H1 (cell line): ENCODE measurements at regions of chr9 and their contacts with region 1.

Region 1: GRCh38 chr9:34603610-34604231 is 8.2 kb downstream of the RPP25L start:
- DNase-seq: peak in 1 of 2 experiments; percentile 96
- H3K4me3 ChIP-seq: no peak overlapping the region
- H3K27ac ChIP-seq: no peak overlapping the region
- H3K4me1 ChIP-seq: peaks cover 0 to 5% (median 2%) of the 10 kb centered on the region in 4 experiments; a peak in 2 of 7 replicates
- H3K27me3 ChIP-seq: peaks cover 0 to 3% (median 0%) of the 10 kb centered on the region in 4 experiments; a peak in 2 of 7 replicates
- CTCF ChIP-seq: peak; percentile 77 to 96 (median 96)
- EP300 ChIP-seq: no peak
- POLR2A ChIP-seq: no peak
- RAD21 ChIP-seq: peak; percentile 99

Region 2: DNA sequence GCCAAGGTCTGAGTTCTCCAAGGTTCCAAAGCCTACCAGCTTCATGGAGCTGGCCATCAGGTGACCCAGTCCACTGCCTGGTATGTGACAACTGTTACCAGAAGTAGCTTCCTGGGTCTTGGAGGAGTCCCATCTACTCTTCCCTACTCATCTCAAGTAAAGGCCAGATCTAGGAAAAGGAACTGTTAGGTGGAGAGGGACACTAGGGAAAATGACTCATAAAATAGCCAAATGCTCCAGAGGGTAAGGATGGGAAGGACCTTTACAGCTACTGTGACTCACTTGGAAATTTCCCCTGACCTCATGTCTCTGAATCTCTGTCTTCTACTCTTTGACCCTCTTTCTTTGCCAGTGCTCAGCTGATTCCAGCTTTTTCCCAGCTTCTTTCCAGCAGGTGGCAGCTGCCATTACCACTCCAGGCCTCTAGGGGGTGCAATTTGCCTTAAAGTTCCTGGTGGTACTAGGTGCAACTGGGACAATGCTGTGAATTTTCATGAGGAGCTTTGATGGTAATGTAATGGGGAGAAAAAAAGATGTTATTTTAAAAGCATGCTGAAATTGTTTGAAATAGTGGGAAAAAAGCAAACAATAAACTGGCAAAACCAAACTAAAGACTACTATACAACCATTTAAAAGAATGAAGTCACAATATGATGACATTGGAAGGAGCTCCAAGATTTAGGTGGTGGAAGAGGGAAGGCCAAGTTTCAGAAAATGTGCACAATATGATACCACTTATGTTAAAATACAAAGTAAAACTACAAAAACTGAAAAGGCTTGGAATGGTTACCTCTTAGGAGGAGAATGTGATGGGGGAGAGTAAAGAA is 200.0 kb before region 1 on chr9:
- CTCF ChIA-PET with region 1: interaction called, 26 read pairs
- POLR2A ChIA-PET with region 1: no interaction called
- DNase-seq: peak in 1 of 2 experiments; percentile 90
- H3K4me3 ChIP-seq: no peak overlapping the region
- H3K27ac ChIP-seq: no peak overlapping the region
- H3K4me1 ChIP-seq: no peaks in the 10 kb centered on the region
- H3K27me3 ChIP-seq: no peaks in the 10 kb centered on the region
- CTCF ChIP-seq: peak; percentile 79 to 98 (median 98)
- EP300 ChIP-seq: no peak
- POLR2A ChIP-seq: no peak
- RAD21 ChIP-seq: peak; percentile 86 to 92

Region 3: DNA sequence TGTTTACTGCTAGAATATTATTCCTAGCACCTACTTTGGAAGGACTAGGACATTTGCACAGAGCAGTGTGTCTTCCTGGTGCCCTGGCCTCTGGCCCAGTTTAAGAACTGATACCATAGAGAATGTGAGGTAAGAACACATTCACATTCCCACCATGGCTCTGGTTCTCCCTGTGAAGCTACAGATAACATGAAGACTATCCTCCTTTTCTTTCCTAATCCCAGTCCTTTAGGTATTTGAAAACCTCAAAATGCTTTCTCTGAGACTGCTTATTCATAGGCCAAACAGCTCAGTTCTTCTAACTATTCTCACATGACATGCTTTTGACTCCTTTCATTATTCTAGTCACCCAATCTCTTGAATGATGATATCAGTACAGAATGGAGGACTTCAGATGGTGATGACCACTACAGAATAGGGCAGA is 157.2 kb before region 1 on chr9:
- CTCF ChIA-PET with region 1: interaction called, 16 read pairs
- POLR2A ChIA-PET with region 1: no interaction called
- DNase-seq: no peak
- H3K4me3 ChIP-seq: no peak overlapping the region
- H3K27ac ChIP-seq: no peak overlapping the region
- H3K4me1 ChIP-seq: peaks cover 2 to 6% (median 5%) of the 10 kb centered on the region in 4 experiments; a peak in 4 of 7 replicates
- H3K27me3 ChIP-seq: no peaks in the 10 kb centered on the region
- CTCF ChIP-seq: no peak
- EP300 ChIP-seq: no peak
- POLR2A ChIP-seq: no peak
- RAD21 ChIP-seq: no peak

Region 4: GRCh38 chr9:34500623-34501267 is 103.0 kb before region 1 on chr9:
- CTCF ChIA-PET with region 1: interaction called, 90 read pairs
- POLR2A ChIA-PET with region 1: no interaction called
- DNase-seq: peak in 1 of 2 experiments; percentile 91
- H3K4me3 ChIP-seq: no peak overlapping the region
- H3K27ac ChIP-seq: no peak overlapping the region
- H3K4me1 ChIP-seq: 0 out of 7 replicates have a peak, but pooled peaks cover 0 to 3% (median 0%) of the 10 kb centered on the region in 4 experiments
- H3K27me3 ChIP-seq: no peaks in the 10 kb centered on the region; a peak in 1 of 7 replicates
- CTCF ChIP-seq: peak; percentile 90 to 97 (median 96)
- EP300 ChIP-seq: no peak
- POLR2A ChIP-seq: no peak
- RAD21 ChIP-seq: peak; percentile 92 to 93

Region 5: DNA sequence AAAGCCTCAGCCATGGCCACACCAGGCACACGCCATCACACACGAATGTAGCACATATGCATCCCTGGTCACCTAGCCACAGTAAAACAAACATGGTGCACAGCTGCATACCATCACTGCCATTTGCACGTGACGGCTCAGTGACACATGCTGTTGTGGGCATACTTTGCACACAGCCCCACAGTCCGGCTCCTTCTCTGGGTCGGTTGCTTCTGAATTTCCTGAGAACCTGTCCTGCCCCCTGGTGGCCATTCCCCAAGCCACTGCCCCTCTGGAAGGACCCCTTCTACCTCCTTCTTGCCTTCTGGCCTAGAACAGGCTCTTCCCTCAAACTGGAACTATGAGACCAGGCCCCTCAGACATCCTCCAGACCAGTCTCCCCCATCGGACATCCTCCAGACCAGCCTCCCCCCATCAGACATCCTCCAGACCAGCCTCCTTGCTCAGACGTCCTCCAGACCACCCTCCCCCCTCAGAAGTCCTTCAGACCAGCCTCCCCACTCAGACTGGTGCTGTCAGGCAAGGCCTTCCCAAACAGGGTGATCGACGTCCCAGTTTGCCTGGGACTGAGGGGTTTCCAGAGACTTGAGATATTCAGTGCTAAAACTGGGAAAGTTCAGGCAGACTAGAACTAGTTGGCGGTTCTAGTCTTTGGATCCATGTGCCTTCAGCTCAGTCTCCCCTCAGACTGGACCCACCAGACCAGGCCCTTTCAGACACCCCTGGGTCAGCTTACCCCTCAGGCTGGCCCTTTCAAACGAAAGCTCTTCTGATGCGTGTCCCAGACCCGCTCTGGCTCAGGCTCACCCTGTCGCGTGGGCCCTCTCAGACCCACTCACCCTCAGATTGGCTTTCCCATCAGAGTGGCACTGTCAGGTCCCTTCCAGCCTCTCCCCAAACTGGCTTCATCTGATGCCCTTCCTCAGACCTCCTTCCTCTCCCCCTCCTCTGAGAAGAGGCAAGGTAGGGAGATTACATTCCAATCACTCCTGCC is 56.6 kb before region 1 on chr9:
- CTCF ChIA-PET with region 1: interaction called, 105 read pairs
- POLR2A ChIA-PET with region 1: no interaction called
- DNase-seq: peak; percentile 47 to 93
- H3K4me3 ChIP-seq: no peak overlapping the region
- H3K27ac ChIP-seq: no peak overlapping the region
- H3K4me1 ChIP-seq: peaks cover 0 to 2% (median 0%) of the 10 kb centered on the region in 4 experiments; a peak in 1 of 7 replicates
- H3K27me3 ChIP-seq: peaks cover 0 to 10% (median 4%) of the 10 kb centered on the region in 4 experiments; a peak in 5 of 7 replicates
- CTCF ChIP-seq: peak; percentile 77 to 93 (median 87)
- EP300 ChIP-seq: no peak
- POLR2A ChIP-seq: no peak
- RAD21 ChIP-seq: peak; percentile 84 to 88

Region 6: GRCh38 chr9:34578241-34579103 is 25.2 kb before region 1 on chr9:
- CTCF ChIA-PET with region 1: interaction called, 33 read pairs
- POLR2A ChIA-PET with region 1: interaction called, 3 read pairs
- DNase-seq: peak in 1 of 2 experiments; percentile 74
- H3K4me3 ChIP-seq: peak overlapping the region; percentile 24 to 55 (median 44)
- H3K27ac ChIP-seq: no peak overlapping the region
- H3K4me1 ChIP-seq: peaks cover 12 to 45% (median 30%) of the 10 kb centered on the region in 4 experiments
- H3K27me3 ChIP-seq: peaks cover 21 to 81% (median 65%) of the 10 kb centered on the region in 4 experiments
- CTCF ChIP-seq: peak in 1 of 3 experiments; percentile 6; a peak in 1 of 4 replicates
- EP300 ChIP-seq: no peak
- POLR2A ChIP-seq: no peak
- RAD21 ChIP-seq: no peak

Region 7: GRCh38 chr9:34628656-34629491 is 25.2 kb after region 1 on chr9 and contains the start of gene ARID3C:
- CTCF ChIA-PET with region 1: interaction called, 401 read pairs
- POLR2A ChIA-PET with region 1: no interaction called
- DNase-seq: peak in 1 of 2 experiments; percentile 70
- H3K4me3 ChIP-seq: peak within 1 kb of the TSS; percentile 9 to 59 (median 40)
- H3K27ac ChIP-seq: no peak within 1 kb of the TSS
- H3K4me1 ChIP-seq: peaks cover 0 to 18% (median 6%) of the 10 kb centered on the region in 4 experiments; a peak in 6 of 7 replicates
- H3K27me3 ChIP-seq: peaks cover 58 to 75% (median 74%) of the 10 kb centered on the region in 4 experiments
- CTCF ChIP-seq: no peak
- EP300 ChIP-seq: no peak
- POLR2A ChIP-seq: no peak
- RAD21 ChIP-seq: no peak
- total RNA-seq, gene ARID3C: not detected in 2 replicates

Region 8: GRCh38 chr9:34737677-34738260 is 134.0 kb after region 1 on chr9:
- CTCF ChIA-PET with region 1: no interaction called
- POLR2A ChIA-PET with region 1: no interaction called
- DNase-seq: no peak
- H3K4me3 ChIP-seq: no peak overlapping the region
- H3K27ac ChIP-seq: no peak overlapping the region
- H3K4me1 ChIP-seq: no peaks in the 10 kb centered on the region
- H3K27me3 ChIP-seq: no peaks in the 10 kb centered on the region
- CTCF ChIP-seq: no peak
- EP300 ChIP-seq: no peak
- POLR2A ChIP-seq: no peak
- RAD21 ChIP-seq: no peak